IMR-90 (cell line): ENCODE measurements at regions of chr2 and their contacts with region 1.

Region 1: DNA sequence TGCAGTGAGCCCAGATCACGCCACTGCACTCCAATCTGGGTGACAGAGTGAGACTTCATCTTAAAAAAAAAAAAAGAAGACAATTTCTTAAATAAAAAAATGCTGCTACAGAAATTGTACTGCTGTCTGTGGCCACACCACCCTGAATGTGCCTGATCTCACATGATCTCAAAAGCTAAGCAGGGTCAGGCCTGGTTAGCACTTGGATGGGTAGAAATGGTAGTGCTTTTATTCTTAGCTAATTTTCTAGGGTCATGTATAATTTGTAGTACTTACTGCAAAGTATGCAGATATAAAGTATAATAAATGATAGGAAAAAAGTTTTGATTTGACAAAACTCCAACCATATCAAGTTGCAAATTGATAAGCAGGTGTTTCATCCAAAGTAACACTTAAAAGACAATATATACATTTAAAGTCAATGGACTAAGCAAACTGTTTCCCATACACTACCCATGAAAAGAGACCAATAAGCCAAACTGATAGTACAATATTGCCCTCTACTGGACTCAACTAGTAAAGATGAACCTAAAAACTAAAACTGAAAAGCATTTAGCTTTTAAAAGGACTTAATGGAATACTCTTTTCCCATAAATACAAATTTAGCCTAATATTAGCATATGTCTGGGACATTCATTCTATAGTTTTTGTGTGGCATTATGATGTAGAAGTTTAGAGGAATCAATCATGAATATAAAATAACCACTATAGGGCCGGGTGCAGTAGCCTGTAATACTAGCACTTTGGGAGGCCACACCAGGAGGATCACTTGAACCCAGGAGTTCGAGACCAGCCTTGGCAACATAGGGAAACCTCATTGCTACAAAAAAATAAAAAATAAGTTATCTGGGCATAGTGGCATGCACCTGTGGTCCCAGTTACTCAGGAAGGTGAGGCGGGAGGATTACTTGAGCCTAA is 18.6 kb upstream of the PEX13 start:
- DNase-seq: peak; percentile 62
- ATAC-seq: peak; percentile 86
- H3K4me3 ChIP-seq: no peak overlapping the region
- H3K27ac ChIP-seq: no peak overlapping the region
- H3K4me1 ChIP-seq: no peaks in the 10 kb centered on the region
- H3K27me3 ChIP-seq: no peaks in the 10 kb centered on the region
- CTCF ChIP-seq: peak; percentile 71
- POLR2A ChIP-seq: no peak
- RAD21 ChIP-seq: peak; percentile 83

Region 2: DNA sequence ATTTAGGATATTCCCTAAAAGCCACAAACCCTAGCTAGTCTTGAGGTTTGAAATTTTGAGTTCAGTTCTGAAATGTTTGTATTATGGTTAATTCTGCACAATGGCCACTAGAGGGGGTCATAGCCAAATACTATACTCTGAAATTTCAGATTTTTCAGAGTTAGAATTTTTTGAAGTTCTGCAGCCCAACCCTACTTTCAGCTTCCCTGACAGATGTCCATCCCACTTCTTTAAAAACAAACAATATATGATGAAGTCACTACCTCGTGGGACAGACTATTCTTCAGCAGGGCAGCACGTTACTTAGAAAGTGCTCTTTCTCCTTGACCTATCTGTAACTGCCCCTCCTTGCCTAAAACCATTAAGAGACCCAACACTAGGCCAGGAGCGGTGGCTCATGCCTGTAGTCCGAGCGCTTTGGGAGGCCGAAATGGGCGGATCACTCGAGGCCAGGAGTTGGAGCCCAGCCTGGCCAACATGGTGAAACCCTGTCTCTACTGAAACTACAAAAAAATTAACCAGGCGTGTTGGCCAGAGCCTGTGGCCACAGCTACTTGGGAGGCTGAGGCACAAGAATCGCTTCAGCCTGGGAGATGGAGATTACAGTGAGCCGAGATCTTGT is 291.0 kb before region 1 on chr2:
- CTCF ChIA-PET with region 1: interaction called, 10 read pairs
- POLR2A ChIA-PET with region 1: no interaction called
- dilution Hi-C with region 1: no loop called
- in situ Hi-C with region 1: loop called (anchors 5 kb)
- intact Hi-C with region 1: loop called (anchors 1 kb)
- DNase-seq: peak; percentile 28
- ATAC-seq: peak; percentile 82
- H3K4me3 ChIP-seq: no peak overlapping the region
- H3K27ac ChIP-seq: no peak overlapping the region
- H3K4me1 ChIP-seq: no peaks in the 10 kb centered on the region; the same call in 1 of the 2 replicates
- H3K27me3 ChIP-seq: no peaks in the 10 kb centered on the region; the same call in 1 of the 2 replicates
- CTCF ChIP-seq: peak; percentile 67
- POLR2A ChIP-seq: no peak
- RAD21 ChIP-seq: peak; percentile 56

Region 3: DNA sequence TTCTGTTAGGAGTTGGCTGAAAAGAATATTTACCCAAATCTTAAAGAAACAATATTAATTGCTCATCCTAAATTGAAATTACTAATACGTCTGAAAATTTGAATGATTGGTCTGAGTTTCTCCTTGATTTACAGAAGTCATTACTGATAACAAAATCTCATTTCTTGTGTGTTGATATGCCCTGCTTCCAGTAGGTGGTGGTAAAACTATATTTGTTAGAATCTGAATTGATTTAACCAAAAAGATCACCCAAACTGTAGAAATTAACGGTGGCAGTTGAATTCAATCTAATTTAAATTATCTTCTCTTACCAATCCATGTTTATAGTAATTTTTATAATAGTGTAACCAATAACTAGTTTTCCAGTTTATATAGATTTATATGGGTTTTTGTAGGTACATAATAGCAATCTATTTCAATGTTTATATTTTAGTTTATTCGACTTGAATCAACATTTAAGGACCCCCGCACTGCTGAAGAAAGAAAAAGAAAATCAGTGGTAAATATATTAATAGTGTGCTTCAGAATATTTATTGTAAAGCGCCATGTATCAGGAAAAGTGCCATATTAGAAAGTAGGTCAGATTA is 204.5 kb before region 1 on chr2:
- CTCF ChIA-PET with region 1: interaction called, 4 read pairs
- POLR2A ChIA-PET with region 1: interaction called, 7 read pairs
- dilution Hi-C with region 1: no loop called
- in situ Hi-C with region 1: loop called (anchors 5 kb)
- intact Hi-C with region 1: loop called (anchors 1 kb)
- DNase-seq: peak; percentile 27
- ATAC-seq: no peak; the same call in 1 of the 2 replicates
- H3K4me3 ChIP-seq: no peak overlapping the region
- H3K27ac ChIP-seq: no peak overlapping the region
- H3K4me1 ChIP-seq: no peaks in the 10 kb centered on the region
- H3K27me3 ChIP-seq: no peaks in the 10 kb centered on the region
- CTCF ChIP-seq: peak; percentile 54
- POLR2A ChIP-seq: no peak
- RAD21 ChIP-seq: peak; percentile 63

Region 4: GRCh38 chr2:60925994-60926736 is 72.7 kb before region 1 on chr2:
- CTCF ChIA-PET with region 1: no interaction called
- POLR2A ChIA-PET with region 1: no interaction called
- dilution Hi-C with region 1: no loop called
- in situ Hi-C with region 1: no loop called
- intact Hi-C with region 1: loop called (anchors 2 kb)
- DNase-seq: peak; percentile 79
- ATAC-seq: peak; percentile 89
- H3K4me3 ChIP-seq: no peak overlapping the region
- H3K27ac ChIP-seq: peak overlapping the region; percentile 41; the same call in 1 of the 2 replicates
- H3K4me1 ChIP-seq: peaks cover 6% of the 10 kb centered on the region
- H3K27me3 ChIP-seq: no peaks in the 10 kb centered on the region
- CTCF ChIP-seq: no peak
- POLR2A ChIP-seq: no peak
- RAD21 ChIP-seq: no peak

Region 5: DNA sequence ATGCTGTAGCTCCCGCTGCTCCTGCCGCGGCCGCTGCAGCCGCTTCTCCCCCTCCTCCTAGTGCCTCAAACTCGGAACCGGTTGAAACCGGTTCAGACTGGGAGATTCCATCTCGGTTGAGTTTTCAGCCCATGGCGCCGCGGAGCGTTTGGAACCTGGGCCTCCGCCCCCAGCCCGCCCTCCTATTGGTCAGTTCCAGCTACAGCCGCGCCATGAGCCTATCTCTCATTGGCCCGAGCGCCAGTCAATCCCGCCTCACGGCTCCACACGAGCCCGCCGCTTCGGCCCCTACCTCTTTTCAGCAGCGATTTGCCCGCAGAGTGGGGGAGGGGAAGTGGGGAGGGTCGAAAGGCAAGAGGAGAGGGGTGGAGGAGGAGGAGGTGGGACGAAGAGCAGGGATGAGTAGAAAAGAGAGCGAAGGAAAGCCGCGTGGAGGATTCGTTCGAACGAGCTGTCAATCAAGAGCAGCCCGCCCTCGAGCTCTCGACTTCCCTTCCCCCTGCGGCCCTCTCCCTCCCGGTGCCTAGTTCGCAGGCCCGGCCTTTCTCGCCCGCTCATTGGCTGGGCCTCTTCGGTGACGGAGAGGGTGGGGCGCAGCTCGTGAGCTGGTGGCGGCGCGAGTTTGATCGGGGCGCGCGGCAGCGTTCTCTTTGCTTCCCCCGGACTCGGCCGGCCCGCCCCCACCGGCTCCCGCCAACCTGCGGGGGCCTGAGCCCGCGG is 539.5 kb after region 1 on chr2 and contains the start of gene XPO1:
- CTCF ChIA-PET with region 1: no interaction called
- POLR2A ChIA-PET with region 1: no interaction called
- dilution Hi-C with region 1: no loop called
- in situ Hi-C with region 1: no loop called
- intact Hi-C with region 1: no loop called
- DNase-seq: peak; percentile 99
- ATAC-seq: peak; percentile 88
- H3K4me3 ChIP-seq: peak within 1 kb of the TSS; percentile 83
- H3K27ac ChIP-seq: peak within 1 kb of the TSS; percentile 89
- H3K4me1 ChIP-seq: peaks cover 4% of the 10 kb centered on the region
- H3K27me3 ChIP-seq: no peaks in the 10 kb centered on the region
- CTCF ChIP-seq: no peak
- POLR2A ChIP-seq: peak; percentile 76
- RAD21 ChIP-seq: no peak
- total RNA-seq, gene XPO1: 104 and 192 TPM in 2 replicates